HAP-1 (cell line): ENCODE measurements at regions of chr15 and their contacts with region 1.

Region 1: DNA sequence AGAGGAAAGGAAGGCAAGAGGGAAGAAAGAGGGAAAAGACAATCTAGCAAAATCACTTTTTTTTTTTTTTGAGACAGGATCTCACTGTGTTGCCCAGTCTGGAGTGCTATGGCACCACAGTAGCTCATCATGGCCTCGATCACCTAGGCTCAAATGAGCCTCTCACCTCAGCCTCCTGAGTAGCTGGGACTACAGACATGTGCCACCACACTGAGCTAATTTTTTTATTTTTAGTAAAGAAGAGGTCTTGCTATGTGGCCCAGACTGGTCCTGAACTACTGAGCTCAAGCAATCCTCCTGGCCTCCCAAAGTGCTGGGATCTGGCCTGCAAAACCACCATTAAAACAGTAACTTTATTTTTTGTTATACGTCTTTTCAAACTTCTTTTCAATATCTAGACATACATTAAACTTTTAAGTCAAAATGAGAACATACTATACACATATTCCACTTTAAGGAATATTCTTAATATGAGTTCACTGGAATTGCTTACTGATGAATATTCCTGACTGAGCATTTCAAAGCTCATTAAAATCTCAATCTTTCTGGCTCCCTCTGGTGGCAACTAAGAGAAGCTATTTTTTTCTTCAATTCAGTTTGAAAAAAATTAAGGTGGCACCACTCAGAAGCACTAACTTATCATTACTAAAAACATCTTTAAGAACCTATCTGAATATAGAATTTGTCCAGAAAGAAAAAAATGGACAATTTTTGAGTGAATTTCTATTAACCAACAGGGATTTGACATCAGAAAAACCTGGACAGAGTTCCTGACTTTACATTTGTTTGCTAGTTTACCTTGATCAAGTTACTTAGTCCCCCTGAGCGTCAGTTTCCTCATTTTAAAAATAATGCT is 40.9 kb downstream of the UACA start:
- DNase-seq: peak in 1 of 2 experiments; percentile 92
- H3K4me3 ChIP-seq: no peak overlapping the region
- H3K4me1 ChIP-seq: peaks cover 4% of the 10 kb centered on the region
- H3K27me3 ChIP-seq: no peaks in the 10 kb centered on the region

Region 2: DNA sequence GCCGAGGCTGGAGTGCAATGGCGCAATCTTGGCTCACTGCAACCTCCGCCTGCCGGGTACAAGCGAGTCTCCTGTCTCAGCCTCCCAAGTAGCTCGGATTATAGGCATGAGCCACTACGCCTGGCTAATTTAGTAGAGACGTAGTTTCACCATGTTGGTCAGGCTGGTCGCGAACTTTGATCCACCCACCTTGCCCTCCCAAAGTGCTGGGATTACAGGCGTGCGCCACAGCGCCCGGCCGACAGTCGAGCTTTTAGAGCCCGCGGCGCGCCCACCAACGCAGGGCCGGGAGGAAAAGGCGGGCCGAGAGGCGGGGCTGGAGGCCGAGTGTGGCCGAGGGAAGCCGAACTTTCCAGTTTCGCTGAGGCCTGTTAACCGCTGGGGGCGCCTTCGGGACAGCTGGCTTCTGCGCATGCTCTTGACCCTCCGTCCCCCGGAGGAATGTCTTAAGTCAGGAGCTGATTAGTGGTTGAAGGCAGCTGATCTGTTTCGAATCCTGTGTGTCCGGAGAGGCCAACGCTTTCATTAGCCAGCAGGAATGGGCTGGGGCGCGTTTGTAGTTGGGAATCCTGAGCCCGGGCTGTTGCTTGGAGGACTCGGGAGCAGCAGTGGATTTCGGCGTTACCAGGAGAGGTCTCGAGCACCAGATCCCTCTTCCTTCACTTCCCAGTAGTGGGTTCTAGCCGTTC is 1259.9 kb before region 1 on chr15:
- in situ Hi-C with region 1: loop called (anchors 25 kb)
- DNase-seq: peak; percentile 100
- H3K4me3 ChIP-seq: peak overlapping the region; percentile 36
- H3K4me1 ChIP-seq: peaks cover 14% of the 10 kb centered on the region
- H3K27me3 ChIP-seq: no peaks in the 10 kb centered on the region

Region 3: DNA sequence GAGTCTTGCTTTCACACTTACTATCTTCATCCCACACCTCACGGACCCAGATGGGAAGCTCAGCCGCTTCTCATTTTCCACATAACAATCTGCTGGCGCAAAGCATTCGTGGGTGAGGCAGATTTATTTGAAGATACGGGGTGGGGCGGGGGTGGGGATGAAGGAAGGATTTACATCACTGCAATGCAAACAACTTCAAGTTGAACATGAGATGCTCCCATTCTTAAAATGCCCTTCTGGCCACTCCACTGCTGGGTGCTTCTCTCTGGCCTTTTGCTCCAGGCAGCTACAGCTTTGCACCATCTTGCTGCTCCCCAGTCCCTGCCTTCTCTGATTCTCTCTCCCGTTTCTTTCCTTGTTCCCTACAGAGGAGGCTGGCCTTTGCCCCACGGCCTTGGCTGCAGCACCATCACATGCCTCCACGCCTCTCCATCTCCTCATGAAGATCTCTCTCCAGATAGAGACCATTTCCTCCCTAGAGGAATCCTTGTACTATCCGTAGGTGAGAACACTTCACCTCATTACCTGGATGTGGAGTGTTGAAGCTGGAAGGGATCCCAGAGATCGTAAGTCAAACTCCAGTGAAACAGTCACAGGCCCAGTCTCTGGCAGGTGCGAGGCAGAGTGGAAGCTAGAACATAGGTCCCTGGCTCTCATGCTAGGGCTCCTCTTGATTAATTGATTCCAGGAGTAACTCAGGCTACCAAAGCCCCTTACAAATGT is 1094.0 kb before region 1 on chr15:
- in situ Hi-C with region 1: no loop called
- DNase-seq: no peak
- H3K4me3 ChIP-seq: no peak overlapping the region
- H3K4me1 ChIP-seq: no peaks in the 10 kb centered on the region
- H3K27me3 ChIP-seq: peaks cover 11% of the 10 kb centered on the region

Region 4: DNA sequence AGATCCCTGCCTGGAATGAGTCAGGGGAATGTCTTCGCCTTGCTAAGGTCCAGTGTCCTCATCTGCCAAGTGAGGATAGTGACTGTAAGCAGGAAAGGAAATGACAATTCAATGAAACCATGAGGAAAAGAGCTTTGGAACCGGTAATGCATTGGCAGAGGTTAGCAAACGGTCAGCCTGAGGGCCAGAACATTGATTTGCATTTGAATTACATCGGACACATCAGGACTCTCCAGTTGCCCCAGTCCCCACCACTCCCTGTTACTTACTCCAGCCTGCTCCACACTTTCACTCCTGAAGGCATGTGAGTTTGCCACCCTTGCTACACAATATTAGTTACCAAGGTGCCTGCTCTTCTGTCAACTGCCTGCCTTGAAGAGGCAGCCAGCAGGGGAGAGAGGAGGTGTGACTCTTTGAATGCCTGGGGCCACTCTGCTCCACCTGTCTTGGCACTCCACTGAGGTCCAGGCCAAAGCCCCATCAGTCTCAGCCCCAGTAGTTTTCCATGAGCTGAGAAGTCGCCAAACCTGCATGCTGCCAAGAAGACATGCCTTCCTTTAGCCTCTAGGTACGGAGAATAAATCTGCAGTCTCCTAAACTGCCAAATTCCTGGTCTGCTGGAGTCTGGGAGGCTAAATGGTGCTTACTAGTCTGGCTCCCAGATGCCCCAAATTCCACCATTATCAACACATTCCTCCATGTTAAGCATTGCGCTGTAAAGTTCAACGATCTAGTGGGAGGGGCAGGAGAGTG is 433.1 kb before region 1 on chr15:
- in situ Hi-C with region 1: no loop called
- DNase-seq: peak in 1 of 2 experiments; percentile 8
- H3K4me3 ChIP-seq: no peak overlapping the region
- H3K4me1 ChIP-seq: peaks cover 7% of the 10 kb centered on the region
- H3K27me3 ChIP-seq: no peaks in the 10 kb centered on the region

Region 5: DNA sequence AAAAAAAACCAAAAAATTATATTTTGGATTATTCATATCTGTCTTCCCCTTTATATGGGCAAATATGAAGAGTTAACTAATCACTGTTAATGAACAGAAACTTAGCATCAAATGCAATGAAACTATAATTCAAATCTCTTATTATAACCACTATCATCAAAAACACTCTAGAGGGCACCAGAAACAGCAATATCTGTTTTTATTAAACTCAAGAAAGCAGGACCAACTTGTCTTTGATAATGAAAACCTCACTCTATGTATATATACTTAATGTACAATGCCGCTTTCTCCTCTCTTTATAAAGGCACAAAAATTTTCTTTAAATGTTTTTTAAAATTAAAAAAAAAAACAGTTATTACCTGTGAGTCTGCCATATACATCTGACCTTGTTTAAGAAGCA is 51.8 kb before region 1 on chr15:
- in situ Hi-C with region 1: loop called (anchors 10 kb)
- DNase-seq: no peak
- H3K4me3 ChIP-seq: no peak overlapping the region
- H3K4me1 ChIP-seq: peaks cover 19% of the 10 kb centered on the region
- H3K27me3 ChIP-seq: no peaks in the 10 kb centered on the region

Region 6: DNA sequence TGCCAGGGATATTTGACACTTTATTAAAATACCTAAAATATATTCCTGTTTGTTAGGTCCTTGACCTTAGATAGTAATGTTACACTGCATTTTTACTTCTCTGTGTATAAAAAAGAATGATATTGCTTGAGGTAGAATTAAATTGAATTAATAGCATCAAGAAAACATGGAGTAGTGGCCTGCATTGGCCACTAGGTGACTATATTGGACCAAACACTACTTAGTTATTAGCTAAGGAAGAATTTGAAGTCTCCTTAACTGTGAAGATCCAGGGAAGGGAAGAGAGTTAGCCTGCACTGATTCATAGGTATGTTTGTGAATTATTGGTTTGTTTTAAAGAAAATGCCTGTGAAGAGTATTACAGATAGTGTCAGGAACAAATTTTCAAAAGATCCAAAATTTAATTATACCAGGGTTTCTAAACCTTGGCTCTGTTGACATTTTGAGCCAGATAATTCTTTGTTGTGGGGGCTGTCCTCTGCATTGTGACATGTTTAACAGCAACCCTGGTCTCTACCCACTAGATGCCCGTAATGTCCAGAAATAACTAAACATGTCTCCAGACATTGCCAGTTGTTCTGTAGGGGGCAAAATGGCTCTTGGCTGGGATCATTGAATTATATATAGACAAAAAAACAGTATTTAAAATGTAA is 289.1 kb after region 1 on chr15:
- in situ Hi-C with region 1: no loop called
- DNase-seq: peak; percentile 47 to 77
- H3K4me3 ChIP-seq: no peak overlapping the region
- H3K4me1 ChIP-seq: no peaks in the 10 kb centered on the region
- H3K27me3 ChIP-seq: no peaks in the 10 kb centered on the region